ENCODE measurements at regions of chr20 and their contacts with region 1.

Region 1: GRCh38 chr20:45545754-45546453 is 1.3 kb downstream of the EPPIN start:
- DNase-seq: peak; percentile 21
- ATAC-seq: peak; percentile 81
- H3K4me3 ChIP-seq: no peak overlapping the region
- H3K27ac ChIP-seq: no peak overlapping the region
- H3K4me1 ChIP-seq: no peaks in the 10 kb centered on the region
- H3K27me3 ChIP-seq: peaks cover 49% of the 10 kb centered on the region; the same call in 1 of the 2 replicates
- CTCF ChIP-seq: peak; percentile 24 to 61 (median 59); a peak in 4 of 6 replicates
- POLR2A ChIP-seq: no peak
- RAD21 ChIP-seq: peak; percentile 81

Region 2: GRCh38 chr20:45450097-45450818 is 95.6 kb before region 1 on chr20:
- CTCF ChIA-PET with region 1: no interaction called
- POLR2A ChIA-PET with region 1: no interaction called
- RAD21 ChIA-PET with region 1: no interaction called
- intact Hi-C with region 1: no loop called
- DNase-seq: peak; percentile 31
- ATAC-seq: peak; percentile 70
- H3K4me3 ChIP-seq: no peak overlapping the region
- H3K27ac ChIP-seq: no peak overlapping the region
- H3K4me1 ChIP-seq: no peaks in the 10 kb centered on the region; a peak in 1 of 4 replicates
- H3K27me3 ChIP-seq: no peaks in the 10 kb centered on the region
- CTCF ChIP-seq: peak; percentile 60 to 78 (median 71); a peak in 5 of 6 replicates
- POLR2A ChIP-seq: no peak
- RAD21 ChIP-seq: peak; percentile 65

Region 3: GRCh38 chr20:45495501-45495941 is 50.4 kb before region 1 on chr20:
- CTCF ChIA-PET with region 1: no interaction called
- POLR2A ChIA-PET with region 1: no interaction called
- RAD21 ChIA-PET with region 1: no interaction called
- intact Hi-C with region 1: no loop called
- DNase-seq: no peak
- ATAC-seq: no peak
- H3K4me3 ChIP-seq: no peak overlapping the region
- H3K27ac ChIP-seq: no peak overlapping the region
- H3K4me1 ChIP-seq: no peaks in the 10 kb centered on the region
- H3K27me3 ChIP-seq: peaks cover 19% of the 10 kb centered on the region; the same call in 1 of the 2 replicates
- CTCF ChIP-seq: no peak
- POLR2A ChIP-seq: no peak
- RAD21 ChIP-seq: no peak

Region 4: DNA sequence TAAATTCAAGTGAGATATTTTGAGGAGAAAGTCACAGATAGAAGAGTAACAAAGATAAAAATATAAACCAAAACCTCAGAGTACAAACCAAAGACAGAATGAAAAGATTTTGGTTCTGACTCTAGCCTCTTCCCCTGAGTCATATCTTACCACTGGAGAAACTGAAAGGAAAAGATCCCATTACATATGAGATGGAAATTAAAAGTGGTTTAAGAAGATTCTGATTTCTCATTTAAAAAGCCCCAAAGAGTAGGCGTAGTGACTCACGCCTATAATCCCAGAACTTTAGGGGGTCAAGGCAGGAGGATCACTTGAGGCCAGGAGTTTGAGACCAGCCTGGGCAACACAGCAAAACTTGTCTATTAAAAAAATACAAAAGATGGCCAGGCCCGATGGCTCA is 206.8 kb after region 1 on chr20:
- CTCF ChIA-PET with region 1: no interaction called
- POLR2A ChIA-PET with region 1: no interaction called
- RAD21 ChIA-PET with region 1: no interaction called
- intact Hi-C with region 1: loop called (anchors 5 kb)
- DNase-seq: no peak
- ATAC-seq: no peak
- H3K4me3 ChIP-seq: no peak overlapping the region
- H3K27ac ChIP-seq: no peak overlapping the region
- H3K4me1 ChIP-seq: no peaks in the 10 kb centered on the region
- H3K27me3 ChIP-seq: no peaks in the 10 kb centered on the region
- CTCF ChIP-seq: no peak
- POLR2A ChIP-seq: no peak
- RAD21 ChIP-seq: no peak